ENCODE measurements at regions of chr10 and their contacts with region 1.

Region 1: GRCh38 chr10:75395066-75395931 is 6.3 kb downstream of the ZNF503 start:
- DNase-seq: peak in 1 of 2 experiments; percentile 90
- H3K4me3 ChIP-seq: peak overlapping the region; percentile 14 to 62 (median 52); a peak in 5 of 8 replicates
- H3K27ac ChIP-seq: no peak overlapping the region
- H3K4me1 ChIP-seq: peaks cover 0 to 37% (median 15%) of the 10 kb centered on the region in 4 experiments; a peak in 6 of 7 replicates
- H3K27me3 ChIP-seq: peaks cover 63 to 93% (median 74%) of the 10 kb centered on the region in 4 experiments
- CTCF ChIP-seq: peak in 2 of 3 experiments; percentile 76 to 93; a peak in 3 of 4 replicates
- EP300 ChIP-seq: no peak
- POLR2A ChIP-seq: no peak
- RAD21 ChIP-seq: peak; percentile 56 to 77

Region 2: GRCh38 chr10:75283671-75284470 is 111.4 kb before region 1 on chr10:
- CTCF ChIA-PET with region 1: interaction called, 25 read pairs
- POLR2A ChIA-PET with region 1: no interaction called
- DNase-seq: no peak
- H3K4me3 ChIP-seq: peak overlapping the region; percentile 44 to 63 (median 58)
- H3K27ac ChIP-seq: no peak overlapping the region
- H3K4me1 ChIP-seq: peaks cover 0 to 7% (median 0%) of the 10 kb centered on the region in 4 experiments; a peak in 2 of 7 replicates
- H3K27me3 ChIP-seq: peaks cover 0 to 11% (median 2%) of the 10 kb centered on the region in 4 experiments; a peak in 3 of 7 replicates
- CTCF ChIP-seq: no peak
- EP300 ChIP-seq: no peak
- POLR2A ChIP-seq: no peak
- RAD21 ChIP-seq: no peak

Region 3: DNA sequence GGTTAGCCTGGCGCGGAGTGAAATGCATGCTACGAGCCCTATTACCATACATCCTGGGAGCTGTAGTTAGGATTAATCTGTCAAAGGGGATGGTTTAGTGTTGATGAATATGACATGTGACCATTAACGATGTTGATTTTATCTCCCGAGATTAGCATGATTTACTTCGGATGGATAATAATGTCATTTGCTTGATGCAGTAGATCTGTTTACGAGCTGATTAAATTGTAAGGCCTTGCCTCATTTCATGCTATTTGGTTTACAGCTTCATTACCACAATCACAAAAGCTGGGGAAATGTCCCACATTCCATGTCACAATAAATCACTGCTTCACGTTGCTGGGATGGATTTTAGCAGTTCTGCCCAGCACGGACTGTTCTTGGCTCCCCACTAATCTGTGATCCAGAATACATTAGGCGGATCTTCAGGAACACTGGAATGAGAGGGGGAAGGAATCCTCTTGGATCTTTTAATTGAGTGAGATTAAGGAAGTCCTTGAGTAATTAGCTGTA is 16.0 kb before region 1 on chr10:
- CTCF ChIA-PET with region 1: interaction called, 13 read pairs
- POLR2A ChIA-PET with region 1: no interaction called
- DNase-seq: no peak
- H3K4me3 ChIP-seq: no peak overlapping the region
- H3K27ac ChIP-seq: no peak overlapping the region; the same call in 1 of the 2 replicates
- H3K4me1 ChIP-seq: no peaks in the 10 kb centered on the region
- H3K27me3 ChIP-seq: peaks cover 0 to 2% (median 0%) of the 10 kb centered on the region in 4 experiments; a peak in 1 of 7 replicates
- CTCF ChIP-seq: no peak
- EP300 ChIP-seq: no peak
- POLR2A ChIP-seq: no peak
- RAD21 ChIP-seq: no peak

Region 4: DNA sequence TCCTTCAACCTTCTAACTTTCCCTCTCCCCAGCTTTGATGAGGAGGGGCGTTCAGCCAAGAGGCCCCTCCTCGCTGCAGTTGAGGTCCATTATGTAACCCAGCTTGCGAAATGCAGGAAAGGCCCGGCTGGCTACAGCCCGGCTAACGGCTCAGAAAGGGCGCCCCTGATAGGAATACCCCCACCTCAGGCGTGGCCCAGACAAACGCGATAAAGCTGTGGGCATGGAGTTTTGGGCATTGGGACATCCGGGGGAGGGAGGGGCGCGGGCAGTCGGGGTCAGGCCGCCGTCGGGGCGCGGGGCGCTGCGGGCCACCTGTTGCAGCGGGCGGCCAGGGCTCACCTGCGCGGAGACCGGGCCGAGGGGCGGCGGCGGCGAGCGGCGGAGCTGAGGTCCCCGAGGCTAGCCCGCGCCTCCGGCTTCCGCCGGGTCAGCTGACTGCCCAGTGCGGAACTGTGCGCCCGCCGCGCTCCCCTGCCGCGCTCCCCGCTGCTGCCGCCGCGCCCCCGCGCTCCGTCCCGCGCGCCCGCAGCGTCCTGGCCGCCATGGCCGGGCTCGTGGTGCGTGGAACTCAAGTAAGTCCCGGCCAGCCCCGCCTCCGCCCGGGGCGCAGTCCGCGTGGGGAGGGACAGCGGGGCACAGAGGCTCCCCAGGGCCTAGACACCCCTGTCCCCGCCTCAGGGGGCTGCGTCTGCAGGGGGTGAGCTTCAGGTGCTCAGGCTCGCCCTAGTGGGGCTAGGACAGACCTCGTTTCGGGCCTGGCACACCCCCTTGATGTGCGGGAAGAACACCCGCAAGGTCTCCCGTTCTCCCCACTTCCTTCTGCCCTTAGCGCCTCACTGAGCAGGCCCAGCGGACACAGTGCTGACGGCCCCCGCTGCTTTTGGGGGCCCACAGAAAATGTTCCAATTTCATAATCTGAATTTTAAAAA is 36.1 kb after region 1 on chr10 and contains the start of gene LRMDA:
- CTCF ChIA-PET with region 1: interaction called, 14 read pairs
- POLR2A ChIA-PET with region 1: no interaction called
- DNase-seq: peak in 1 of 2 experiments; percentile 61
- H3K4me3 ChIP-seq: peak within 1 kb of the TSS; percentile 22 to 57 (median 33); a peak in 7 of 8 replicates
- H3K27ac ChIP-seq: no peak within 1 kb of the TSS
- H3K4me1 ChIP-seq: peaks cover 5 to 13% (median 8%) of the 10 kb centered on the region in 4 experiments
- H3K27me3 ChIP-seq: peaks cover 51 to 88% (median 81%) of the 10 kb centered on the region in 4 experiments
- CTCF ChIP-seq: no peak
- EP300 ChIP-seq: no peak
- POLR2A ChIP-seq: no peak
- RAD21 ChIP-seq: no peak
- total RNA-seq, gene LRMDA: 0.86 and 2.4 TPM in 2 replicates